Left cardiac atrium (tissue), 4 donors: ENCODE measurements at regions of chr5 and their contacts with region 1.

Region 1: GRCh38 chr5:150801117-150801927 is 22.8 kb downstream of the SMIM3 start:
- DNase-seq: no peak
- ATAC-seq: peak; percentile 71 to 93

Region 2: DNA sequence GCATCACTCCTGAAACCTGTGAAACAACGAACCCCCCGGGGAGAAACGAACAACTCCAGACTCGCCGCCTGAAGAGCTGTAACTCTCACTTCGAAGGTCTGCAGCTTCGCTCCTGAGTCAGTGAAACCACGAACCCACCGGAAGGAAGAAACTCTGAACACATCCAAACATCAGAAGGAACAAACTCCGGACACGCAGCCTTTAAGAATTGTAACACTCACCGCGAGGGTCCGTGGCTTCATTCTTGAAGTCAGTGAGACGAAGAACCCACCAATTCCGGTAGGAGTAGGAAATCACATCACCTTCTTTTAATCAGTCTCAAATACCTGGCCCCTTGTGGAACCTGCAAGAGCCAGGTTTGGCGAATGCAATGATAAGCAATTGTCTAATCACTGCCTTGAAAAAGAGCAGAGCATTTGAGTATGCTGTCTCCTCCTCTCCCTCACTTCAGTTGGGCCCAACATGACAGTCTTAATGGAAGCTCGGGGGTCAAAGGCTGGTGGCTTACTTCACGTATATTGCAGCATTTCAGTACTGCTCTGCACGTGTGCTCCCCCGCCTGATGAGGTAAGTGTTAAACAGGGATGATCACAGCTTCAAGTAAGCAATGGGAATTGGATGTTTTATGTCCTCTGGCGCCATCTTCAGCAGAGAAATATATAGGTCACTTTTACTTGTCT is 45.5 kb after region 1 on chr5:
- intact Hi-C with region 1: loop called in 1 of 2 experiments (anchors 1 kb)
- DNase-seq: peak; percentile 45
- ATAC-seq: peak; percentile 94 to 97

Region 3: GRCh38 chr5:151093476-151093889 is 292.2 kb after region 1 on chr5:
- intact Hi-C with region 1: no loop called
- DNase-seq: no peak
- ATAC-seq: peak; percentile 25 to 29

Region 4: GRCh38 chr5:151357801-151358200 is 556.5 kb after region 1 on chr5:
- intact Hi-C with region 1: no loop called
- DNase-seq: no peak
- ATAC-seq: no peak